Kidney (tissue), 22 donors: ENCODE measurements at regions of chr11 and their contacts with region 1.

Region 1: DNA sequence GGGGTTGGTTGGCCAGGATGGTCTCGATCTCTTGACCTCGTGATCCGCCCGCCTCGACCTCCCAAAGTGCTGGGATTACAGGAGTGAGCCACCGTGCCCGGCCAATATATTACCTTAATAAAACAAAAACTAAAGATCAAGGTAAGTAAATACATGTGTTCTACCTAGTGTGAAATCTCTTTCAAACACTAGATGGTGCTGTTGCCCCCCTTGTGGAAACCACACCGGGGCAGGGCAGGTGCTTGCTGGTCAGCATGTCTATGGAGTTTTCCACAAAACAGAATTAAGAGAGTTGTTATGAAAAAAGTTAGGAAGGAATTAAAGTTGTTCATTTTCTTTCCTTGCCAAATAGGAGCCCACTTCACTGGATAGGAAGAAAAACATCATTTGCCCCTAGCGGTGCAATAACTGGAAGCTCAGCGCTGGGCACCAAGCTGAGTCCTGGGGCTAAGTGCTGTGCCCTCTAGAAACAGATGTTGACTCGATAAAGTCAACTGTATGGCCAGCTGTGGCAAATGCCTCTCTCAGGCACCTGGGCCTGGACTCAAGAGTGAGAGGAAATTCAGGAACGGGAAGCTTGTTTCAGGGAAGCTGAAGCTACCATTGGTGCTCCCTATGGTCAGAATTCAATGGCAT is 6.3 kb upstream of the KCNJ5 start:
- DNase-seq: peak in 4 of 5 donors; percentile 85 to 87 (median 86)
- H3K4me3 ChIP-seq: no peak overlapping the region
- H3K27ac ChIP-seq: no peak overlapping the region
- H3K4me1 ChIP-seq: peaks cover 0 to 2% (median 0%) of the 10 kb centered on the region in 3 donors
- H3K27me3 ChIP-seq: no peaks in the 10 kb centered on the region
- CTCF ChIP-seq: peak; percentile 80

Region 2: GRCh38 chr11:128956401-128957201 is 71.8 kb after region 1 on chr11:
- intact Hi-C with region 1: loop called (anchors 5 kb)
- DNase-seq: peak in 3 of 5 donors; percentile 72 to 92 (median 91)
- H3K4me3 ChIP-seq: no peak overlapping the region
- H3K27ac ChIP-seq: no peak overlapping the region
- H3K4me1 ChIP-seq: no peaks in the 10 kb centered on the region
- H3K27me3 ChIP-seq: no peaks in the 10 kb centered on the region
- CTCF ChIP-seq: peak; percentile 61